Prostate gland (tissue), 2 donors: ENCODE measurements at regions of chr17 and their contacts with region 1.

Region 1: GRCh38 chr17:40287494-40288369 is at the start of gene CDC6:
- DNase-seq: peak; percentile 99
- H3K4me3 ChIP-seq: peak within 1 kb of the TSS; percentile 35 to 45
- H3K27ac ChIP-seq: peak within 1 kb of the TSS in 1 of 2 donors; percentile 5
- H3K4me1 ChIP-seq: peaks cover 4% of the 10 kb centered on the region
- H3K27me3 ChIP-seq: no peaks in the 10 kb centered on the region
- CTCF ChIP-seq: no peak
- POLR2A ChIP-seq: no peak
- total RNA-seq, gene CDC6: 2.1 to 10.3 TPM

Region 2: DNA sequence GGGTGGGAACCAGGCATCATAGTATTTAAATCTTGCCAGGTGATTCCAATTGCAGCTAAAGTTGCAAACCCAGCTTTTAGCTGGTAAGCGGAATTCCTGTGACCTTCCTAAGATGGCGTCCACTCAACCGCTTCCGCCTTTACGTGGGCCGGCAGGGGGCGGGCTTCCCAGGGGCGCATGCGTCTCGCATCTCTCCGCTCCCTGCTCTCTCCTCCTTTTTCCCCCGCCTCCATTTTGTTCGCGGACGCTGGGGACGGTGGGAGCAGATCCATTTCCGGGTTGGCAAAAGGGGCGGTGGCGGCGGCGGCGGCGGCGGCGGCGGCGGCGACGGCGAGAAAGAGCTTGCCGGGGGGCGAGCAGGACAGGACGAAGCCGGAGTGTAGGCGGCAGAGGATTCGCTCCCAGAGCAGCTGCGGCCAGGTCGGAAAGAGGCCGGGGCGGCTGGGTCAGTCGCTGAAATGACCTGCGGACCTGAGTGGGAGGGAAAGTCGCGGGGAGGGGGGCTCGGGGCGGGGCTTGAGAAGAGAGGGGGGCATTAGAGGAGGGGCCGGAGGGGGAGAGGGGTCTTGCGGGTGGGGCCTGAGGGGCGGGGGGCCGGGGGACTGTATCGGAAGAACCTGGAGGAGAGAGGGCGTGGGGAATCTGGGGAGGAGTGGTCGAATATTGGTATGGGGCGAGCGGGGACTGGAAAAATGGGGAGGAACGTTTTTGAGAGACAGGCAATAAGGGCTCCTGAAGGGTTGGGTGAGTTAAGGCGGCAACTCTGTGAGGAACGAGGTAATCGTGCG is 68.5 kb before region 1 on chr17 and contains the start of gene WIPF2:
- intact Hi-C with region 1: loop called (anchors 5 kb)
- DNase-seq: peak; percentile 96
- H3K4me3 ChIP-seq: peak within 1 kb of the TSS; percentile 58 to 78
- H3K27ac ChIP-seq: peak within 1 kb of the TSS; percentile 93 to 95
- H3K4me1 ChIP-seq: no peaks in the 10 kb centered on the region
- H3K27me3 ChIP-seq: no peaks in the 10 kb centered on the region
- CTCF ChIP-seq: peak; percentile 73 to 95 (median 90)
- POLR2A ChIP-seq: peak; percentile 81
- total RNA-seq, gene WIPF2: 12.6 to 27.0 TPM

Region 3: GRCh38 chr17:40230670-40231069 is 57.1 kb before region 1 on chr17:
- intact Hi-C with region 1: no loop called
- DNase-seq: no peak
- H3K4me3 ChIP-seq: no peak overlapping the region
- H3K27ac ChIP-seq: no peak overlapping the region
- H3K4me1 ChIP-seq: no peaks in the 10 kb centered on the region
- H3K27me3 ChIP-seq: no peaks in the 10 kb centered on the region
- CTCF ChIP-seq: no peak
- POLR2A ChIP-seq: no peak

Region 4: GRCh38 chr17:40371261-40371929 is 83.7 kb after region 1 on chr17:
- intact Hi-C with region 1: no loop called
- DNase-seq: no peak
- H3K4me3 ChIP-seq: no peak overlapping the region
- H3K27ac ChIP-seq: no peak overlapping the region
- H3K4me1 ChIP-seq: no peaks in the 10 kb centered on the region
- H3K27me3 ChIP-seq: no peaks in the 10 kb centered on the region
- CTCF ChIP-seq: no peak
- POLR2A ChIP-seq: no peak